Caco-2 (cell line): ENCODE measurements at regions of chr12 and their contacts with region 1.

Region 1: GRCh38 chr12:113980537-113981337 is 14.6 kb upstream of the RBM19 start:
- DNase-seq: peak in 1 of 2 experiments; percentile 52
- H3K4me3 ChIP-seq: no peak overlapping the region
- H3K4me3 Mint-ChIP-seq: no peak overlapping the region
- H3K27ac Mint-ChIP-seq: no peak overlapping the region
- H3K4me1 ChIP-seq: no peaks in the 10 kb centered on the region
- H3K4me1 Mint-ChIP-seq: no peaks in the 10 kb centered on the region
- H3K27me3 ChIP-seq: no peaks in the 10 kb centered on the region
- H3K27me3 Mint-ChIP-seq: peaks cover 2% of the 10 kb centered on the region
- CTCF ChIP-seq: peak; percentile 93 to 95

Region 2: GRCh38 chr12:113867258-113867657 is 113.5 kb before region 1 on chr12:
- CTCF ChIA-PET with region 1: no interaction called
- POLR2A ChIA-PET with region 1: no interaction called
- intact Hi-C with region 1: no loop called
- DNase-seq: peak in 1 of 2 experiments; percentile 40
- H3K4me3 ChIP-seq: no peak overlapping the region
- H3K4me3 Mint-ChIP-seq: no peak overlapping the region
- H3K27ac Mint-ChIP-seq: no peak overlapping the region
- H3K4me1 ChIP-seq: no peaks in the 10 kb centered on the region
- H3K4me1 Mint-ChIP-seq: no peaks in the 10 kb centered on the region
- H3K27me3 ChIP-seq: no peaks in the 10 kb centered on the region
- H3K27me3 Mint-ChIP-seq: no peaks in the 10 kb centered on the region
- CTCF ChIP-seq: peak; percentile 46 to 49

Region 3: DNA sequence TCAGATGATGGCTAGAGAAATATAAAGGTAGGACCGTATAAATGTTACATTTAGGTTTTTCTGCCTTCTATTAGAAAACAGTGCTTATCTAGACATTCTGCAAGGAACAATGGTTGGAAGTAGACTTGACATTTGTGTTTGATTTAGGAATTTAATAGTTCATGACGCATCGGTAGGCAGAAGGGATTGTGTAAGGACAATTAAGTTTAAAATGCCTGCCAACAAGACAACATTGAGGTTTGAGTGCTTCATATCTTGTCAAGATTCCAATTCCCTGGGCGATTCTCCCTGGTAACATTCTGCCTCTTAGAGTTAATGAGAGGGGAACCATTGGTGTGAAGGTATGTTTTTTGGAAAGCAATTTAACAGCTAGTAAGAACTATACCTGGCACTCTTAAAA is 172.2 kb after region 1 on chr12:
- CTCF ChIA-PET with region 1: interaction called, 4 read pairs
- POLR2A ChIA-PET with region 1: no interaction called
- intact Hi-C with region 1: loop called (anchors 10 kb)
- DNase-seq: no peak
- H3K4me3 ChIP-seq: no peak overlapping the region
- H3K4me3 Mint-ChIP-seq: no peak overlapping the region
- H3K27ac Mint-ChIP-seq: no peak overlapping the region
- H3K4me1 ChIP-seq: no peaks in the 10 kb centered on the region
- H3K4me1 Mint-ChIP-seq: no peaks in the 10 kb centered on the region
- H3K27me3 ChIP-seq: no peaks in the 10 kb centered on the region
- H3K27me3 Mint-ChIP-seq: peaks cover 12% of the 10 kb centered on the region
- CTCF ChIP-seq: no peak

Region 4: DNA sequence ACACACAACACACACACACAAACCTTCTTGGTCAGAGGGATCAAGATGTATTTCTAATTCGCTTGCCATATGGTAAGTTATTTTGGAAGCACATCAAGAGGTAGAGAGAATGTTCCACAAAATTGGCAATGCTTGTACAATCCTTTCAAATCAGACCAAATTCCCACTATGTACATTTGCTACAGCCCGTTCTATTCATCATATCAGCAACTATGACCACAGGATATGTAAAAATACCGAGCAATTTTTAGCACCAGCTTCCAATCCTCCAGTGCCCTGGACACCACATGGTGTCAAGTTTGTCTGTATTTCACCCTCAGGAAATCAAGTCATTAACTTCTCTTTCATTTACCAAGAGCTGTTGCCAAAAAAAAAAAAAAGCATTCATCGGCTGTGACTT is 404.0 kb after region 1 on chr12:
- CTCF ChIA-PET with region 1: no interaction called
- POLR2A ChIA-PET with region 1: no interaction called
- intact Hi-C with region 1: no loop called
- DNase-seq: no peak
- H3K4me3 ChIP-seq: no peak overlapping the region
- H3K4me3 Mint-ChIP-seq: no peak overlapping the region
- H3K27ac Mint-ChIP-seq: no peak overlapping the region
- H3K4me1 ChIP-seq: no peaks in the 10 kb centered on the region
- H3K4me1 Mint-ChIP-seq: no peaks in the 10 kb centered on the region
- H3K27me3 ChIP-seq: no peaks in the 10 kb centered on the region
- H3K27me3 Mint-ChIP-seq: peaks cover 25% of the 10 kb centered on the region
- CTCF ChIP-seq: no peak

Region 5: DNA sequence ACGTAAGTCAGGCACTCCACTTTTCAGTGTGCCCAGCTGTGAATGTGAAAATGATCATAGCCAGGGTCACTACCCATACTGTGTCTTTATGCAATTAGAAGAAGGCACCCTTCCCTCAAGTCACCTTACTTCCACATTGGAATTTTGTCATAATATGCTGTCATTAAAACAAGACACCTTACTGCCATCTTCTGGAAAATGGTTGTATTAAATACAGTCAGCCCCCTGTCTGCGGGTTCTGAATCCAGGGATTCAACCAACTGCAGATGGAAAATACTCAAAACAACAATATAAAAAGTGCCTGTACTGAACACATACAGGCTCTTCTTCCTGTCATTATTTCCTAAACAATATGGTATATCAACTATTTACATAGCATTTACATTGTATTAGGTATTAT is 495.4 kb after region 1 on chr12:
- CTCF ChIA-PET with region 1: interaction called, 7 read pairs
- POLR2A ChIA-PET with region 1: no interaction called
- intact Hi-C with region 1: loop called (anchors 1 kb)
- DNase-seq: peak in 1 of 2 experiments; percentile 41
- H3K4me3 ChIP-seq: no peak overlapping the region
- H3K4me3 Mint-ChIP-seq: no peak overlapping the region
- H3K27ac Mint-ChIP-seq: no peak overlapping the region
- H3K4me1 ChIP-seq: no peaks in the 10 kb centered on the region
- H3K4me1 Mint-ChIP-seq: peaks cover 2% of the 10 kb centered on the region
- H3K27me3 ChIP-seq: no peaks in the 10 kb centered on the region
- H3K27me3 Mint-ChIP-seq: peaks cover 32% of the 10 kb centered on the region
- CTCF ChIP-seq: peak; percentile 58 to 65

Region 6: GRCh38 chr12:115451780-115452736 is 1471.3 kb after region 1 on chr12:
- CTCF ChIA-PET with region 1: no interaction called
- POLR2A ChIA-PET with region 1: no interaction called
- intact Hi-C with region 1: loop called (anchors 5 kb)
- DNase-seq: peak in 1 of 2 experiments; percentile 62
- H3K4me3 ChIP-seq: peak overlapping the region; percentile 39
- H3K4me3 Mint-ChIP-seq: peak overlapping the region; percentile 69
- H3K27ac Mint-ChIP-seq: no peak overlapping the region
- H3K4me1 ChIP-seq: 0 out of 2 replicates have a peak, but pooled peaks cover 16% of the 10 kb centered on the region
- H3K4me1 Mint-ChIP-seq: peaks cover 5% of the 10 kb centered on the region
- H3K27me3 ChIP-seq: no peaks in the 10 kb centered on the region
- H3K27me3 Mint-ChIP-seq: no peaks in the 10 kb centered on the region
- CTCF ChIP-seq: no peak